HEK293 (cell line): ENCODE measurements at regions of chr6 and their contacts with region 1.

Region 1: DNA sequence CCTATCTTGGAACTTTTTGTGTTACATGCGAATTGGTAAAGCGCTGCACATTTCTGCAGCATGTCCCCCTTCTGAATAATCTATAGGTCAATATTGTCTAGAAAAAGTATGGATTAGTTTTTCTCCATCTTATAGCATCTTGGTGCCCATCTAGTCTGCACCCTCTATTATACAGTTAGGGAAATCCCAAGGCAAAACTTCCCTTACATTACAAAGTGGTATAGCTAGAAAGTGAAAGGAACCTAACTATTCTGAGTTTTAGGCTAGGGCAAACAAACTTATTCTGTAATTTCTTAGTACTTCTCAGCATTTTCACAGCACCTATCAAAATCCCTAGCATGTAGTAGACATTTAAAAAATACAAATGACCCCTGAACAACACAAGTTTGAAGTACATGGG is 133.5 kb upstream of the CCDC28A start:
- H3K4me3 ChIP-seq: no peak overlapping the region
- H3K27ac ChIP-seq: no peak overlapping the region
- H3K4me1 ChIP-seq: no peaks in the 10 kb centered on the region
- CTCF ChIP-seq: no peak

Region 2: DNA sequence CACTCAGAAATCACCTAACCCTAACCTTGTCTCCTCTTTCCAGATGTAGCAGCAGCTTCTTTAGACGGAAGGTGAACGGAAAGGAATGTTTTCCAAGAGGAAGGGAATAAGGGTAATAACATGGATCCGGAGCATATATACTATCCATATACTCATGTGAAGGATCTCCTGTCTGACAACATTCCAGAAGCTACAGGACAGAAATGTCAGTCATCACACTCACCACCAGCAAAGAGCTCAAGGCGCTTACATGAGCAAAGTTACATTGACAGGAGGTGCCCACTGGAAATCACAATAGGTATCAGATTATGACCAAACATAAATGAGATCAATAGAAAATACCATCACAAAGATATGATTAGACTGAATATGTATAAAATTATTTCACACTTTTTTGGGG is 11.5 kb after region 1 on chr6:
- CTCF ChIA-PET with region 1: no interaction called
- POLR2A ChIA-PET with region 1: interaction called, 11 read pairs
- H3K4me3 ChIP-seq: no peak overlapping the region
- H3K27ac ChIP-seq: no peak overlapping the region
- H3K4me1 ChIP-seq: peaks cover 26% of the 10 kb centered on the region
- CTCF ChIP-seq: no peak